Body of pancreas (tissue), 4 donors: ENCODE measurements at regions of chr6 and their contacts with region 1.

Region 1: GRCh38 chr6:7615611-7616383 is 25.8 kb downstream of the SNRNP48 start:
- DNase-seq: peak; percentile 50 to 74 (median 60)
- ATAC-seq: peak; percentile 79
- H3K4me3 ChIP-seq: no peak overlapping the region
- H3K27ac ChIP-seq: no peak overlapping the region
- H3K4me1 ChIP-seq: peaks cover 4% of the 10 kb centered on the region
- H3K27me3 ChIP-seq: peaks cover 0 to 3% of the 10 kb centered on the region in 2 donors
- CTCF ChIP-seq: peak; percentile 39 to 92 (median 83)
- POLR2A ChIP-seq: no peak

Region 2: GRCh38 chr6:7282097-7282906 is 333.5 kb before region 1 on chr6:
- intact Hi-C with region 1: loop called (anchors 10 kb)
- DNase-seq: no peak
- ATAC-seq: no peak
- H3K4me3 ChIP-seq: no peak overlapping the region
- H3K27ac ChIP-seq: peak overlapping the region in 1 of 4 donors; percentile 10
- H3K4me1 ChIP-seq: peaks cover 19% of the 10 kb centered on the region
- H3K27me3 ChIP-seq: no peaks in the 10 kb centered on the region
- CTCF ChIP-seq: no peak
- POLR2A ChIP-seq: no peak

Region 3: DNA sequence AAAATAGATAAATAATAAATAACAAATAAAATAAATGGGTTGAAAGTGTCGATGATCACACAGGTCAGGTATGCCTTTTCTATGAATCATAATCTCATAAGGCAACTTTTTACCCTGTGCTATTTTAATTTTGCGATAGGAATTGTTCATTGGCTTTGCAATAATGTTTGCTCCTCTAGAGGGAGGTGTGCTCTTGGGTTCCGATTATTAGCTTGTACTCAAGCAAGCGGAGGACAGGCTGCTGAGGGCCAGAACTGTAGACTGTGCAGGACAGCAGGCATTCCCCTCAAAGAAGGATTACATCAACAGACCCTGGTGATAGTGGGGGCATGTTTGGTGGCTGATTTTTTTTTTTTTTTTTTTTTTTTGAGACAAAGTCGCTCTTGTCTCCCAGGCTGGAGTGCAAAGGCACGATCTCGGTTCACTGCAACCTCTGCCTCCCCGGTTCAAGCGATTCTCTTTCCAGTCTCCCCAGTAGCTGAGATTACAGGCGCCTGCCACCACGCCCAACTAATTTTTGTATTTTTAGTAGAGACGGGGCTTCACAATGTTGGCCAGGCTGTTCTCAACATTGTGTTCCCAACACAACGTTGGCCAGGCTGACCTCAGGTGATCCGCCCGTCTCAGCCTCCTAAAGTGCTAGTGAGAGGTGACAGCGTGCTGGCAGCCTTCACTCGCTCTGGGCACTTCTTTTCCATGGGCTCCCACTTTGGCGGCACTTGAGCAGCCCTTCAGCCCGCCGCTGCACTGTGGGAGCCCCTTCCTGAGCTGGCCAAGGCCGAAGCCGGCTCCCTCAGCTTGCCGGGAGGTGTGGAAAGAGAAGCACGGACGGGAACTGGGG is 190.6 kb before region 1 on chr6:
- intact Hi-C with region 1: loop called (anchors 10 kb)
- DNase-seq: peak; percentile 43 to 72 (median 56)
- ATAC-seq: peak; percentile 96
- H3K4me3 ChIP-seq: no peak overlapping the region
- H3K27ac ChIP-seq: no peak overlapping the region
- H3K4me1 ChIP-seq: no peaks in the 10 kb centered on the region
- H3K27me3 ChIP-seq: no peaks in the 10 kb centered on the region
- CTCF ChIP-seq: peak; percentile 39 to 89 (median 84)
- POLR2A ChIP-seq: no peak